Body of pancreas (tissue), 4 donors: ENCODE measurements at regions of chr1 and their contacts with region 1.

Region 1: GRCh38 chr1:25754470-25755181 is 45.4 kb upstream of the SELENON start:
- DNase-seq: no peak
- ATAC-seq: no peak
- H3K4me3 ChIP-seq: no peak overlapping the region
- H3K27ac ChIP-seq: no peak overlapping the region
- H3K4me1 ChIP-seq: peaks cover 10% of the 10 kb centered on the region
- H3K27me3 ChIP-seq: no peaks in the 10 kb centered on the region
- CTCF ChIP-seq: no peak
- POLR2A ChIP-seq: no peak

Region 2: DNA sequence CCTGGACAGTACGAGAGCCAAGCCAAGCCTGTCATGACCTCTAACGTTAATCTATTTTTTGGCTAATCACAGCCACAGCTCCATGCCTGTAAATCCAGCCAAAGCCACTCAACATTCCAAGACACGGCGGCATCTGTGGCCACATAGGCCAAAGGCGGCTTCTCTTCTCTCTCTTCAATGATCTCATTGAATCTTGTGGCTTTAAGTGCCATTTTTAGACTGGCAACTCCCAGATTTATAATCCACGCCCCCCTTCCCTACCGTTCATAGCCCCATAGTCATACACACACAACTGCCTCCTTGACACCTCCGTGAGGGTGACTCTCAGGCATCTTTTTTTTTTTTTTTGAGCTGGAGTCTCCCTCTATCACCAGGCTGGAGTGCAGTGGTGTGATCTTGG is 39.7 kb after region 1 on chr1:
- intact Hi-C with region 1: loop called (anchors 5 kb)
- DNase-seq: no peak
- ATAC-seq: no peak
- H3K4me3 ChIP-seq: no peak overlapping the region
- H3K27ac ChIP-seq: no peak overlapping the region
- H3K4me1 ChIP-seq: peaks cover 25% of the 10 kb centered on the region
- H3K27me3 ChIP-seq: no peaks in the 10 kb centered on the region
- CTCF ChIP-seq: no peak
- POLR2A ChIP-seq: no peak

Region 3: DNA sequence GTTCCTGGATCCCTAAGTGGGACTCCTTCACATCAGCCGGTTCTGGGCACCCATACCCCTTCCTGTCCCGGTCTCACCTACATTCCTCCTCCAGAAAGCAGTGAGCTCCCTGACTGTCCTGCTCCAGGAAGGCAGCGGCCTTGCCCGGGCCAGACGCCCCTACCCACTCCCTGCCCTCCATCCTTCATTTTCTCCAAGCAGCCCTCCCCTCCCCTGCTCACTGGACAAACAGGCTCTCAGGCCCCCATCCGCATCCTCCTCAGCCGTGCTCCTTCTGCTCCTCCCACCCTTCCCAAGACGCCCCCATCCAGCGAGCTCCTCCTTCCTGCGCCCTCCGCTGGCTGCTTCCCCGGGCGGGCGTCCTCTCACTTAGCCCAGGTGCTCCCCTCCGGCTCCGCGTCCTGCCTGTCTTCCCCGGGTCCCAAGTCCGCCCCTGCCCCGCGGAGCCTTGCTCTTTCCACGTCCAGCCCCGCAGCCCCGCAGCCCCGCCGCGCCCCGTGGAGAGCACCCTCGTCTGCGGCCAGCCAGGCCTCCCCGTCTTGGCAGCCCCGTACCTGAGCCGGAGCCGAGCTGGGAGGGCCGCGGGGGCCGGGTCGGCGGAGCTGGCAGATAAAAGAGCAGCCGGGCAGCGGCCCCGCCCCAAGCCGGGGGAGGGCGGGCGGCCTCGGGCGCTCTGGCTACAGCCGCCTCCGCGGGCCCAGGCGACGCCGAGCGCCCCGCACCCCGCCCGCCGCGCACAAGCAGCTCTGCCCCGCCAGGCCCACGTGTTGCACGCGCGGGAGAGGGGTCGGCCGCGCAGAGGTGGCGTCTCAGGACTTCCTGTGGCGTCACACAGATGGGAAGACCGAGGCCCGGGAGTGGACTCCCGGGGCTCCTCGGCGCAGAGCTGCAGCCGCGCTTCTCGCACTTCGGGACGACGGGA is 120.6 kb after region 1 on chr1 and contains the start of gene PAQR7:
- intact Hi-C with region 1: no loop called
- DNase-seq: peak; percentile 85 to 91 (median 86)
- ATAC-seq: peak; percentile 73
- H3K4me3 ChIP-seq: peak within 1 kb of the TSS in 1 of 2 donors; percentile 18
- H3K27ac ChIP-seq: peak within 1 kb of the TSS; percentile 81 to 96 (median 87)
- H3K4me1 ChIP-seq: peaks cover 81% of the 10 kb centered on the region
- H3K27me3 ChIP-seq: no peaks in the 10 kb centered on the region
- CTCF ChIP-seq: peak in 1 of 7 experiments; percentile 11
- POLR2A ChIP-seq: peak; percentile 35 to 67 (median 59)
- total RNA-seq, gene PAQR7: 3.0 to 4.4 TPM